ENCODE measurements at regions of chr12 and their contacts with region 1.

Region 1: DNA sequence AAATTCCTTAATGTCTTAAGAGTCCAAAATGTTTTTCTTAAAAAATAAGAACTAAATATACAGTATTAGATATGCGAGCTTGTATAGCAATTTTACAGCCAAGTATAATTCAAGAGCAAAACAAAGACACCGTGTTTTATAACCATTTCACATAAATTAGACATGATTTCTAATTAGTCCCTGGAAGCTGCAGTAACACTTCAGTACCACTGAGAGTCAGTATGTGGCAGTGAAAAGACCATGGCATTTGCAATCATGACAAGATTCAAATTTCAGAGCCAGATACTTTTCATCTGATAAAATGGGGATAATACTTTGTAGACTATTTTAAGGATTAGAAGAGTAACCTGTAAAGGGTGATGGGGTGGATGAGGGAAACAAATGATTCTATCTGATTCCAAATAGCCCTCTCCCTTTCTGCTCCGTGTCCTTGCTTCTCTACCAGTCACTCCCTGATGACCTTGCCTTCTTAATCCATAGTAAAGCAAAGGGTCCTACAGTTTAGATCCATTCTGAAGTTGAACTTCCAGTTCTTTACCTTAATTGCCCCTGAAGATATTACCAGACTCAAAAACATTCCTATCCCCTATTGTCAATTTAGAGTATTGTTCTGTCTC is 145.4 kb upstream of the ABCD2 start:
- DNase-seq: no peak
- ATAC-seq: peak in 3 of 4 donors; percentile 26 to 63 (median 55)
- H3K4me3 ChIP-seq: no peak overlapping the region
- H3K27ac ChIP-seq: no peak overlapping the region
- H3K4me1 ChIP-seq: no peaks in the 10 kb centered on the region
- H3K27me3 ChIP-seq: no peaks in the 10 kb centered on the region
- CTCF ChIP-seq: peak; percentile 56 to 81 (median 67)
- POLR2A ChIP-seq: no peak

Region 2: GRCh38 chr12:39692258-39692853 is 72.7 kb before region 1 on chr12:
- intact Hi-C with region 1: no loop called
- DNase-seq: no peak
- ATAC-seq: no peak
- H3K4me3 ChIP-seq: no peak overlapping the region
- H3K27ac ChIP-seq: no peak overlapping the region
- H3K4me1 ChIP-seq: no peaks in the 10 kb centered on the region
- H3K27me3 ChIP-seq: no peaks in the 10 kb centered on the region
- CTCF ChIP-seq: peak in 10 of 12 donors; percentile 22 to 55 (median 44)
- POLR2A ChIP-seq: no peak

Region 3: GRCh38 chr12:39990122-39991101 is 225.4 kb after region 1 on chr12:
- intact Hi-C with region 1: loop called (anchors 1 to 10 kb)
- DNase-seq: peak in 4 of 5 donors; percentile 15 to 55 (median 40)
- ATAC-seq: peak in 3 of 4 donors; percentile 60 to 81 (median 64)
- H3K4me3 ChIP-seq: no peak overlapping the region
- H3K27ac ChIP-seq: no peak overlapping the region
- H3K4me1 ChIP-seq: peaks cover 0 to 4% (median 0%) of the 10 kb centered on the region in 12 donors
- H3K27me3 ChIP-seq: no peaks in the 10 kb centered on the region
- CTCF ChIP-seq: peak; percentile 68 to 90 (median 81)
- POLR2A ChIP-seq: no peak

Region 4: DNA sequence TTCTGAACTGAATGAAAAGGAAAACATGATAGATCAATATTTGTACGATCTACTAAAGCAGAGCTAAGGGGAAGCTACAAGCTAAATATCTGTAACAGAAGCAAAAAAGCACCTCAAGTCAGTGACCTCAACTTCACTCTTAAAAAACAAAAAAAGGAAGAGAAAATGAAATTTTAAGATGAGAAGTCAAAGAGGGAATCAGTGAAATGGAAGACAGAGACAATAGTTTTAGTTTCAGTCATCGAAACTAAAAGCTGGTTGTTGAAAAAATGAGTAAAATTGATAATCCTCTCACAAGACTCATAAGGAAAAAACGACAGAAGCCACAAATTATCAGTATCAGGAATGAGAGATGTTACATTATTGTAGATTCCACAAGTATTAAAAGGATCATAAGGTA is 352.8 kb after region 1 on chr12:
- intact Hi-C with region 1: loop called in 1 of 10 experiments (anchors 10 kb)
- DNase-seq: no peak
- ATAC-seq: no peak
- H3K4me3 ChIP-seq: no peak overlapping the region
- H3K27ac ChIP-seq: no peak overlapping the region
- H3K4me1 ChIP-seq: no peaks in the 10 kb centered on the region
- H3K27me3 ChIP-seq: no peaks in the 10 kb centered on the region
- CTCF ChIP-seq: no peak
- POLR2A ChIP-seq: no peak